ENCODE measurements at regions of chr17 and their contacts with region 1.

Region 1: GRCh38 chr17:66702106-66702872 is 132.6 kb upstream of the CACNG5 start:
- DNase-seq: no peak
- ATAC-seq: no peak
- H3K4me3 ChIP-seq: no peak overlapping the region
- H3K27ac ChIP-seq: no peak overlapping the region
- H3K4me1 ChIP-seq: no peaks in the 10 kb centered on the region
- H3K27me3 ChIP-seq: no peaks in the 10 kb centered on the region
- CTCF ChIP-seq: no peak

Region 2: GRCh38 chr17:66056148-66056547 is 646.1 kb before region 1 on chr17:
- intact Hi-C with region 1: no loop called
- DNase-seq: no peak
- ATAC-seq: no peak
- H3K4me3 ChIP-seq: no peak overlapping the region
- H3K27ac ChIP-seq: no peak overlapping the region
- H3K4me1 ChIP-seq: no peaks in the 10 kb centered on the region
- H3K27me3 ChIP-seq: no peaks in the 10 kb centered on the region
- CTCF ChIP-seq: no peak

Region 3: DNA sequence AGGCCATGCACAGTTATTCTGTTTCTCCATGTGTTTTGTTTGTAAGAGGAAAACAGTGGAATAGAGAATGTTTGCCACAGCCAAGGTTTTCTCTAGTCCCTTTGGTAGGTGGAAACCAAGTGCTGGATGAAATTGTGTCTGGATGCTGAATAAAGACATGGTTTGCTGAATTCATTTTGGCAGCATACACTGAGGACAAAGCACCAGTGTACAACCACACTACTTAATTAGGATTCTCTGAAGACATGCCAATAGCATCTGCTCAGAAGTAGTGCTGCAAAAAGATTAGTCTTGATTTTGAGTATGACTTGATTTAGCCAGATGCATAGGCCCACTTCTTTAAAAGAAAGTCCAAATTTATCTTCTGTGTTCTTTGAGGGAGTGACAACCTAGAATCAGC is 97.9 kb before region 1 on chr17:
- intact Hi-C with region 1: no loop called
- DNase-seq: no peak
- ATAC-seq: no peak
- H3K4me3 ChIP-seq: no peak overlapping the region
- H3K27ac ChIP-seq: no peak overlapping the region
- H3K4me1 ChIP-seq: no peaks in the 10 kb centered on the region
- H3K27me3 ChIP-seq: no peaks in the 10 kb centered on the region
- CTCF ChIP-seq: no peak

Region 4: DNA sequence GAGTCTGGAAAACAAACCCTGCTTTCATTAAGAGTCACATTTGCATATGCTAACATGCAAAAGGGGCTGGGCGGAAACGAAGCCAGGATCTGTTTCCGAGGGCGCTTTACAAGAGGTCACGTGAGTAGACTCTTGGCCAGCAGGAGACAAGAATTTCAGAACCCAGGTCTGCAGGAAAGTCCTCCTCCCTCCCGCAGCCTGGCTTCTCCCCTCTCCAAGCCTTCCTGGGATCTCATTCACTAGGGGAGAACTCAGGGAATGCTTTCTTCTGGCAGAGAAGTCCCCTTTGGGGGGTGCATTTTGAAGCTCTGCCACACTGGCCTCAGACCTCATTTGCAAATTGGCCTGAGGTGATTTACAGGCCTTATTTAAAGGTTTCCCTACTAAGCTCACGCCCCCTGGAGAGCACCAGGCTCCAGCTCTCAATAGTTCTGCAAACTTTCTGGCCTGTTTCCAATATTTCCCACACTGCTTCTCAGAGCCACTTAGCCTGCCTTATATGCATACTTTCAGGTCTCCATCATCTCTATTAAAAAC is 75.5 kb after region 1 on chr17:
- intact Hi-C with region 1: no loop called
- DNase-seq: peak in 3 of 4 donors; percentile 47 to 66 (median 63)
- ATAC-seq: peak; percentile 62
- H3K4me3 ChIP-seq: no peak overlapping the region
- H3K27ac ChIP-seq: peak overlapping the region in 1 of 2 donors; percentile 33
- H3K4me1 ChIP-seq: no peaks in the 10 kb centered on the region
- H3K27me3 ChIP-seq: no peaks in the 10 kb centered on the region
- CTCF ChIP-seq: no peak

Region 5: DNA sequence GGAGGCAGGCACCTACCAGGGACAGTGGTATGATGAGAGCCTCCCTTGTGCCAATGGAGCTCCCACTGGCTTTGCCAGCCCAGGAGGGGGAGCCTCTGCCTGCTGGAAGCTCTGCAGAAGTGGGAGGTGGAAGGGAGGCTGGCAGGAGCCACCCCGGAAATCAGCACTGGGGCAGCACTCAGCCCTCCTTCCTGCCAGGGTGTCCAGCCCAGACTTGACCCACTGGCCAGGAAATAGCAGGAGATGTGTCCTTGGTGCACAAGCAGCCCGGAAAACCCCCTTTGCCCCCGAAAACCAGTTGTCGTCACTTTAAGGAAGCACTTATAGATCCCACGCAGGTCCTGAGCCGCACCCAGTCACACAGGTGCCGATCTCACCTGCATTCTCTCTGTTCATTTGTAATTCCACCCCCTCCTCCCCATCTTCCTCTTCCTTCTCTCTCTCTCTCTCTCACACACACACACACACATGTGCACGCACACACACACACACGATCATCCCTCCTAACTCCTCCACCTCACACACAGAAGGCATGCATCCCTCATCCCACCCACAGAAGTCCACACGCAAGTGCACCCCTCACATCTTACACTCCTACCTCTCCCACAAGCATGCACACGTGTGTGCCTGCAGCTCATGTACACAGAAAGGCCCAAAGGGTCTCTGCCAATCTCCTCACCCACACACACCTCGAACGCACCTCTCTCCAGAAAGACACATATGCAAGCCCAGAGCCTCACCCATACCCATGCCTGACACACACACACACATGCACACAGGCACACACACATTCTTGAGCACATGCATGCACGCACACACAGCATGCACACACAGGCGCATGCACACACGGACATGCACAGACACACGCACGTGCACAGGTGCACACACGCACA is 213.2 kb after region 1 on chr17:
- intact Hi-C with region 1: no loop called
- DNase-seq: peak in 2 of 4 donors; percentile 33 to 46
- ATAC-seq: peak; percentile 87
- H3K4me3 ChIP-seq: no peak overlapping the region
- H3K27ac ChIP-seq: no peak overlapping the region
- H3K4me1 ChIP-seq: no peaks in the 10 kb centered on the region
- H3K27me3 ChIP-seq: peaks cover 0 to 8% of the 10 kb centered on the region in 2 donors
- CTCF ChIP-seq: no peak

Region 6: GRCh38 chr17:67212689-67213417 is 510.6 kb after region 1 on chr17:
- intact Hi-C with region 1: loop called in 1 of 2 experiments (anchors 10 kb)
- DNase-seq: no peak
- ATAC-seq: peak; percentile 41
- H3K4me3 ChIP-seq: no peak overlapping the region
- H3K27ac ChIP-seq: no peak overlapping the region
- H3K4me1 ChIP-seq: peaks cover 16 to 54% of the 10 kb centered on the region in 2 donors
- H3K27me3 ChIP-seq: no peaks in the 10 kb centered on the region
- CTCF ChIP-seq: no peak